Activated CD4-positive, alpha-beta T cell treated with anti-CD3 and anti-CD28 coated beads for 36 hours (primary cell): ENCODE measurements at regions of chr14 and their contacts with region 1.

Region 1: GRCh38 chr14:91836119-91836881 is 31.0 kb downstream of the TC2N start:
- DNase-seq: peak; percentile 97
- ATAC-seq: peak; percentile 97
- H3K4me3 Mint-ChIP-seq: peak overlapping the region; percentile 83
- H3K27ac Mint-ChIP-seq: peak overlapping the region; percentile 76
- H3K4me1 Mint-ChIP-seq: peaks cover 70% of the 10 kb centered on the region
- H3K27me3 Mint-ChIP-seq: no peaks in the 10 kb centered on the region

Region 2: DNA sequence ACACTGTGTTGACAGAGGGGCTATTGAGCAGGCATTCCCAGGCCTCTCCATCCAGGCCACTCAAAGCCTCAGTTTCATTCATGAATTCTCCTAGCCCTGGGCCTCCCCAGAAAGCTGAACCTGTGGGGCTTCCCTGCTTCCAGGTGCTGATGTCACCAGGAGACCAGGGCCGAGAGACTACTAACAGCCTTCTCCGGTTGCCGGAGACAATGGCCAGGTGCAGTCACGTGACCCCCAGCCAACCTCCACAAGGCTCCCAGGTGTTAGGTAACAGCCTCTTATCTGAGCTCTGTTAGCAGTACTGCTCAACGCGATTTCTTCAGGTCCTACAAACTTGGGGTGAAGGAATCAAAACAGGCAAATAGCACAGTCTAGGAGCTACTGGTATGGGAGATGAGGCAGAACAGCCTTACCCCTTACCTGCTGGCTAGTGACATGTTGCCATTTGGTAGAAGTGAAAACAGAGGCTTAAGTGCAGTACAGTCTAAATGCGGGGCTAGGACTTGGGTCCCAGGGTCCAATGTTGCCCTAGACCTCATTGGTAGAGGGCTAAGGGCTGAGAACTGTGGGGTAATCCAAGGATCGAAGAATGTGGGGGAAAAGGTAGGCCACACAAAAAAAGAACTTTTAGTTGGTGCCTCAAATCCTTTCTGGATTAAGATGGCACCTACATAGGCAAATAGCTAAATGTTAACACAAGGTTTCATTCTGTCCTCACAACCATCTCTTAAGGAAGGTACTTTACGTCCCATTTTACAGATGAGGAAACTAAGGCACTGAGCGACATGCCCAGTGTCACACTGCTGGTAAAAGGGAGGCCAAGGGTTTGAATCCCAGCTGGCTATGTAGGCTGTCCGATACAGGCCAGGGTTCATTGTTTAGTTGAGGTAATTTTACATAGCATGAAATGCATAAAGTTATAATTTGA is 422.5 kb before region 1 on chr14:
- CTCF ChIA-PET with region 1: no interaction called
- POLR2A ChIA-PET with region 1: no interaction called
- intact Hi-C with region 1: no loop called
- DNase-seq: peak; percentile 59
- ATAC-seq: no peak
- H3K4me3 Mint-ChIP-seq: peak overlapping the region; percentile 92
- H3K27ac Mint-ChIP-seq: peak overlapping the region; percentile 99
- H3K4me1 Mint-ChIP-seq: peaks cover 65% of the 10 kb centered on the region
- H3K27me3 Mint-ChIP-seq: no peaks in the 10 kb centered on the region

Region 3: DNA sequence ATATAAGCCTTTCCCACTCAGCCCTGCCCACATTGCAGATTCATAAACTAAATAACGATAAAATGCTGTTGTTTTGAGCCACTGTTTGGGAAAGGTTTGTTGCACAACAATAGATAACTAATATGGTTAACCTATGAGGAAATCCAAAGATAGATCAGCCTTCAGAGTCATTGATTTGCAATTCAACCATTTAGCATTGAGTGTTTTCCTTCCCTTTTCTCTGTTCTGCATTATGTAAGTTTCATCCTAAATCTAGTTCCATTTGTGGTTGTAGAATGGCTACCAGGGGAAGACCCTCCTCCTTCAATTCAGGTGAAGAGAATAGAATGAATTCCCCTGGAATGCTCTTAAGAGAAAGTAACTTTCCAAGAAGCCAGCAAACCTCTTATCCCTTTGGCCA is 11.4 kb after region 1 on chr14:
- CTCF ChIA-PET with region 1: interaction called, 5 read pairs
- POLR2A ChIA-PET with region 1: no interaction called
- intact Hi-C with region 1: loop called in 1 of 2 experiments (anchors 1 kb)
- DNase-seq: no peak
- ATAC-seq: no peak
- H3K4me3 Mint-ChIP-seq: no peak overlapping the region
- H3K27ac Mint-ChIP-seq: no peak overlapping the region
- H3K4me1 Mint-ChIP-seq: peaks cover 48% of the 10 kb centered on the region
- H3K27me3 Mint-ChIP-seq: no peaks in the 10 kb centered on the region

Region 4: GRCh38 chr14:91866061-91866460 is 29.8 kb after region 1 on chr14:
- CTCF ChIA-PET with region 1: interaction called, 7 read pairs
- POLR2A ChIA-PET with region 1: no interaction called
- intact Hi-C with region 1: loop called (anchors 2 kb)
- DNase-seq: peak; percentile 66
- ATAC-seq: peak; percentile 20
- H3K4me3 Mint-ChIP-seq: peak overlapping the region; percentile 84
- H3K27ac Mint-ChIP-seq: peak overlapping the region; percentile 97
- H3K4me1 Mint-ChIP-seq: peaks cover 91% of the 10 kb centered on the region
- H3K27me3 Mint-ChIP-seq: no peaks in the 10 kb centered on the region

Region 5: GRCh38 chr14:91911474-91912032 is 75.3 kb after region 1 on chr14:
- CTCF ChIA-PET with region 1: interaction called, 3 read pairs
- POLR2A ChIA-PET with region 1: no interaction called
- intact Hi-C with region 1: loop called in 1 of 2 experiments (anchors 5 kb)
- DNase-seq: peak; percentile 70
- ATAC-seq: peak; percentile 98
- H3K4me3 Mint-ChIP-seq: no peak overlapping the region
- H3K27ac Mint-ChIP-seq: peak overlapping the region; percentile 83
- H3K4me1 Mint-ChIP-seq: peaks cover 15% of the 10 kb centered on the region
- H3K27me3 Mint-ChIP-seq: peaks cover 2% of the 10 kb centered on the region

Region 6: DNA sequence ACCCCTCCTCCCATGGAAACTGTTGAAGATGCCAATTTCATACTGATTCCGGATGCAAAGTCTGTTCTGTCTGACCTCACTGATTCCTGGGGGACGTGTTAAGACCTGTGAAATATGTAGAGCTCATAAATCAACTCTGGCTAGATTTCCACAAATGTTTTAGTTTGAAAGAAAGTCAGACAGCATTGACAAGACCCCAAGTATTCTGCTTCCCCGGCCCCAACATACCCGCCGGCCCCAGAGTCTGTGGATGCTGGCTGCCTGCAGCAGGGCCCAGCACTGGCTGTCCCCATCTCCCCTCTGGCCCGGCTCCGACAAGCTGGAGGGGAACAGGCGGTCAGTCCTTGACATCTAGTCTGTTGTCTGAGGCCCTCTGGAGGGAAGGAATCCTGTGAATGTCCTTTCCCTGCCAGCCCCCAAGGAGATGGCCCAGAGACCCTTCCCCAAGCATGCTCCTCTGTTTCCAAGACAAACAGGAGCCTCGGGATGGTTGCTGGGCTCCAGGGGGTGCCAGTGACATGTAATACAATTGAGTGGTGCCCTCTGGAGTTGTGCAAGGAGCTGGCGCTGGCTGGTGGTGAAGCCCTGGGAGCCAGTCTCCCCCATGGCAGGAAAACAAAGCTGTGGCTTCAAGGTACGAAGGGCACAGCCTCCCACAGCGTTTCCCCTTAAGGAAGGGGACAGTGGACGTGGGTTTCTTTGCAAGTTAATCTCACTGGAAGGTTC is 88.9 kb after region 1 on chr14:
- CTCF ChIA-PET with region 1: no interaction called
- POLR2A ChIA-PET with region 1: no interaction called
- intact Hi-C with region 1: no loop called
- DNase-seq: no peak
- ATAC-seq: no peak
- H3K4me3 Mint-ChIP-seq: no peak overlapping the region
- H3K27ac Mint-ChIP-seq: no peak overlapping the region
- H3K4me1 Mint-ChIP-seq: no peaks in the 10 kb centered on the region
- H3K27me3 Mint-ChIP-seq: no peaks in the 10 kb centered on the region

Region 7: DNA sequence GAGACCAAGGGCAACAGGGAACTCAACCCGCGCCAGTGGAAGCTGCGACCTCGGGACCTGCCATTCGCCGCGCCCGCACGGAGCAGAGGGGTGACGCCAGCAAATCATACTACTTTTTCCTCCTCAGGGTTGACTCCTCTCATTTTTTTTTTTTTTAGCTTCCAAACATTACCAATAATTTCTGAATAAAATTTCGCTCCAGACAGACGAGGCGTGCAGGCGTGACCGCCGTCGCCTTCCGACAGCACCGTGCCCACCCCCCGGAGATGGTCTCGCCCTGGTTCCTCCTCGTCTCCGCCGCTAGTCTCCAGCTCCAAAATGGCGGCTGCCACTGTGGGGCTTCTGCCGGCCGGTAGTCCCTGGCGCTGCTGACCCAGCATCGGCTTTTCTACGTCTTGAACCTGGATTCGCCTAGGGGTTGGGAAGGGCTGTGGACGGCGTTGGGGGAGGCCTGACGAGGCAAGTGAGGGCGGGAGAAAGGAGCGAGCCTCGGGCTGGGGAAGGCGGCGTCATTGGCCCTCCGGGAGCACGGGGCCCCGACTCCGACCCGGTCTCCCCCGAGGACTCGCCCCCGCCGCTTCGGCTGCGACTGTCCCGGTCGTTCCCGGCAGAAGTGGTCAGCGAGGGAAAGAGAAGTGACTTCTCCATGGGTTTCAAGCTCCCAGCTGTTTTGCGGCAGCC is 285.5 kb after region 1 on chr14 and contains the starts of genes CPSF2 and NDUFB1:
- CTCF ChIA-PET with region 1: interaction called, 3 read pairs
- POLR2A ChIA-PET with region 1: no interaction called
- intact Hi-C with region 1: loop called in 1 of 2 experiments (anchors 5 kb)
- DNase-seq: peak; percentile 90
- ATAC-seq: peak; percentile 92
- H3K4me3 Mint-ChIP-seq: peak within 1 kb of the TSS; percentile 77
- H3K27ac Mint-ChIP-seq: peak within 1 kb of the TSS; percentile 100
- H3K4me1 Mint-ChIP-seq: peaks cover 34% of the 10 kb centered on the region
- H3K27me3 Mint-ChIP-seq: no peaks in the 10 kb centered on the region
- total RNA-seq, gene CPSF2: 102 to 117 TPM
- total RNA-seq, gene NDUFB1: 68.9 to 118 TPM